Breast epithelium (tissue), 4 donors: ENCODE measurements at regions of chr7 and their contacts with region 1.

Region 1: DNA sequence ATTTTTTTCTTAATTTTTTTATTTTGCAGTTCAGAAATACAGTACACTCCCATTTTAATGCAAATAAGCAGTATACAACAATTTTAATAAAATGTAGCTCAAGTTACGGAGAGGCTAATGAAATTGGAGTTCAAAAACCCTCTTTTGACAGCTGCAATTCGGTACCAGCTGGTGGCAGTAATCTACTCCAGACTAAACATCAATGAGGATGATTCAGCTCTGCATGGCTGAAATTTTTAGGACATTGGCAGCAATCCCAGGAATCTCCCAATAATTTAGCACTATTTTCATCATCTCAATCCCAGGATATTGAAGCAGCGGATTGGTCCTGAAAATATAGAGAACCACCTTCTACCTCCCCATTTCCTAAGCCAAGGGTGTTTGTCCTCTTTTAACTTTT is 278.8 kb downstream of the CACNA2D1 start:
- DNase-seq: no peak
- H3K4me3 ChIP-seq: no peak overlapping the region
- H3K27ac ChIP-seq: no peak overlapping the region
- H3K4me1 ChIP-seq: no peaks in the 10 kb centered on the region
- H3K27me3 ChIP-seq: no peaks in the 10 kb centered on the region
- CTCF ChIP-seq: no peak
- POLR2A ChIP-seq: no peak

Region 2: DNA sequence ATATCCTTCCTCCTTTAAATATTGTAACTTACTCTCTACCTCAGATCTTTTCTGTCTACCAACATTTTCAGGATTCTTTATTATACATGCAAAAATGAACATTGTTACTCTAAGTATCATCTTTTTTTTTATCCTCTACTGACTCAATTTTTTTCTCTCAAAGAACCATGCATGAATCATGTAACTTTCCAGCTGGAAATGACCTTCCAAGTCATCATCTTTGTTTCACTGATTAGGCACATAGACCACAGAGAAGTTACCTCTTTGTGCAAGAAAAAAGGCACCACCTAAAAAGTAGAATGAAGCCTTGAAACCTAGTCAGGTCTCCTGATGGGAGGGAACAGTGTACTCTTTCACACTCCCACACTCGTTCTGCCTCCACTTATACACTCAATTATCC is 629.8 kb before region 1 on chr7:
- intact Hi-C with region 1: loop called (anchors 10 kb)
- DNase-seq: no peak
- H3K4me3 ChIP-seq: no peak overlapping the region
- H3K27ac ChIP-seq: no peak overlapping the region
- H3K4me1 ChIP-seq: no peaks in the 10 kb centered on the region
- H3K27me3 ChIP-seq: no peaks in the 10 kb centered on the region
- CTCF ChIP-seq: no peak
- POLR2A ChIP-seq: no peak